ENCODE measurements at regions of chr11 and their contacts with region 1.

Region 1: DNA sequence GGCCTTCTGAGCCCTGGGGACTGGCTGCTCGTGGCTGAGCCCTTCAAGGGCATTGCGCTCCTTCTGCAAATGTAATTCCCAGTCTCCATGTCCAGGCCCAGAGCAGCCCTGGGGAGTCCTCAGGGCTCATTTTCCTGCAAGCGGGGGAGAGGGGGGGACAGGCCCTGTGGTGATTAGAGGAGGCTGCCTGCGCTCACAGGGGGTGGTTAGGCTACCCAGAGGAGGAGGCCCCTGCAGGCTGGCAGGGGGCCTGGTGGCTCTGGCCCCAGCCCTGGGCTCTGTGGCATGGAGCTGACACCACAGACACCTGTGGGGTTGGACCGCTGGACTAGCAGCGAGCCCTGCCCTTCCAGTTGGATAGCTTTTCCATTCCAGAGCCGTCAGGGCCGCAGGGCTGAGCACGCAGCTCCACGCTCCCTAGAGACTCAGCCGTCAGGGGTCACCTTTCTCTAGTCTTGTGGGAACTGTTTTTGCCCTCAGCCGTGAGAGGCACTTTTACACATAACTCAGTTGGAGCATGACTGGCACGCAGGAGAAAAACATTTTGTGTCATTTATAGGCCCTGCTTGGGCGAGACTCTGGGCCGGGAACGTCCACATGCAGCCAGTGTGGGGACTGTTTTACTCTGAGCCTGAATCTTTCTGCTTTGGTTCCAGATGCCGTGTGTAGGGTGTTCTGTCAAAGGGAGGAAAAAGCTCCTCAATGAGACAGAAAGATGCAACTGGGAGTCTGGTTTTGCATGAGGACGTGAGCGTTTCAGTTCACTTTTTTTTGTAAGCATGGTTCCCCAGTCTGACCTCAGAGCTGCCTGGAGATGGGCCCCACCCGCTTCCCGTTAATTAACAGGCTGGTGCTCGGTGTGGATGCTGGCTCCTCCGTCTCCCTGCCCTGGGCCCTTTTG is 58.1 kb downstream of the LRP5 start:
- DNase-seq: no peak
- H3K4me3 ChIP-seq: no peak overlapping the region
- CTCF ChIP-seq: no peak

Region 2: GRCh38 chr11:68354148-68354872 is 16.2 kb before region 1 on chr11:
- CTCF ChIA-PET with region 1: interaction called, 5 read pairs
- POLR2A ChIA-PET with region 1: interaction called, 12 read pairs
- DNase-seq: peak; percentile 87
- H3K4me3 ChIP-seq: no peak overlapping the region
- CTCF ChIP-seq: no peak

Measured in AG04449 (cell line).